CD4-positive, alpha-beta T cell (primary cell): ENCODE measurements at regions of chr13 and their contacts with region 1.

Region 1: GRCh38 chr13:46321494-46322225 is 65.4 kb downstream of the RUBCNL start:
- DNase-seq: peak; percentile 63 to 88 (median 70)
- ATAC-seq: peak; percentile 90
- H3K4me3 ChIP-seq: peak overlapping the region; percentile 37
- H3K4me3 Mint-ChIP-seq: peak overlapping the region; percentile 82
- H3K27ac ChIP-seq: peak overlapping the region; percentile 33 to 46
- H3K27ac Mint-ChIP-seq: peak overlapping the region; percentile 91
- H3K4me1 ChIP-seq: peaks cover 19% of the 10 kb centered on the region
- H3K4me1 Mint-ChIP-seq: peaks cover 43% of the 10 kb centered on the region
- H3K27me3 ChIP-seq: no peaks in the 10 kb centered on the region
- H3K27me3 Mint-ChIP-seq: peaks cover 3% of the 10 kb centered on the region
- CTCF ChIP-seq: peak; percentile 92

Region 2: GRCh38 chr13:45511310-45512097 is 810.2 kb before region 1 on chr13:
- CTCF ChIA-PET with region 1: no interaction called
- POLR2A ChIA-PET with region 1: no interaction called
- intact Hi-C with region 1: loop called (anchors 1 to 2 kb)
- DNase-seq: peak in 8 of 14 experiments; percentile 2 to 83 (median 31)
- ATAC-seq: peak; percentile 91
- H3K4me3 ChIP-seq: no peak overlapping the region
- H3K4me3 Mint-ChIP-seq: no peak overlapping the region
- H3K27ac ChIP-seq: no peak overlapping the region
- H3K27ac Mint-ChIP-seq: peak overlapping the region; percentile 32
- H3K4me1 ChIP-seq: no peaks in the 10 kb centered on the region
- H3K4me1 Mint-ChIP-seq: peaks cover 16% of the 10 kb centered on the region
- H3K27me3 ChIP-seq: no peaks in the 10 kb centered on the region
- H3K27me3 Mint-ChIP-seq: no peaks in the 10 kb centered on the region
- CTCF ChIP-seq: peak; percentile 92

Region 3: GRCh38 chr13:45807520-45808099 is 514.0 kb before region 1 on chr13:
- CTCF ChIA-PET with region 1: no interaction called
- POLR2A ChIA-PET with region 1: interaction called, 3 read pairs
- intact Hi-C with region 1: loop called in 1 of 2 experiments (anchors 2 kb)
- DNase-seq: peak in 8 of 14 experiments; percentile 3 to 58 (median 21)
- ATAC-seq: no peak
- H3K4me3 ChIP-seq: no peak overlapping the region
- H3K4me3 Mint-ChIP-seq: no peak overlapping the region
- H3K27ac ChIP-seq: no peak overlapping the region
- H3K27ac Mint-ChIP-seq: no peak overlapping the region
- H3K4me1 ChIP-seq: peaks cover 4% of the 10 kb centered on the region
- H3K4me1 Mint-ChIP-seq: no peaks in the 10 kb centered on the region
- H3K27me3 ChIP-seq: no peaks in the 10 kb centered on the region
- H3K27me3 Mint-ChIP-seq: no peaks in the 10 kb centered on the region
- CTCF ChIP-seq: peak; percentile 58

Region 4: GRCh38 chr13:46160471-46161066 is 161.1 kb before region 1 on chr13:
- CTCF ChIA-PET with region 1: interaction called, 13 read pairs
- POLR2A ChIA-PET with region 1: no interaction called
- intact Hi-C with region 1: loop called (anchors 1 to 2 kb)
- DNase-seq: peak in 7 of 14 experiments; percentile 19 to 91 (median 51)
- ATAC-seq: peak; percentile 83
- H3K4me3 ChIP-seq: no peak overlapping the region
- H3K4me3 Mint-ChIP-seq: peak overlapping the region; percentile 83
- H3K27ac ChIP-seq: peak overlapping the region; percentile 62 to 69
- H3K27ac Mint-ChIP-seq: peak overlapping the region; percentile 91
- H3K4me1 ChIP-seq: peaks cover 32% of the 10 kb centered on the region
- H3K4me1 Mint-ChIP-seq: peaks cover 57% of the 10 kb centered on the region
- H3K27me3 ChIP-seq: no peaks in the 10 kb centered on the region
- H3K27me3 Mint-ChIP-seq: no peaks in the 10 kb centered on the region
- CTCF ChIP-seq: peak; percentile 89

Region 5: GRCh38 chr13:46184277-46184699 is 137.4 kb before region 1 on chr13:
- CTCF ChIA-PET with region 1: interaction called, 4 read pairs
- POLR2A ChIA-PET with region 1: no interaction called
- intact Hi-C with region 1: loop called in 1 of 2 experiments (anchors 1 kb)
- DNase-seq: peak; percentile 51 to 90 (median 66)
- ATAC-seq: peak; percentile 56
- H3K4me3 ChIP-seq: peak overlapping the region; percentile 21
- H3K4me3 Mint-ChIP-seq: peak overlapping the region; percentile 76
- H3K27ac ChIP-seq: peak overlapping the region; percentile 84 to 91
- H3K27ac Mint-ChIP-seq: peak overlapping the region; percentile 98
- H3K4me1 ChIP-seq: peaks cover 33% of the 10 kb centered on the region
- H3K4me1 Mint-ChIP-seq: peaks cover 47% of the 10 kb centered on the region
- H3K27me3 ChIP-seq: no peaks in the 10 kb centered on the region
- H3K27me3 Mint-ChIP-seq: no peaks in the 10 kb centered on the region
- CTCF ChIP-seq: peak; percentile 74

Region 6: GRCh38 chr13:46295491-46296114 is 26.1 kb before region 1 on chr13:
- CTCF ChIA-PET with region 1: interaction called, 7 read pairs
- POLR2A ChIA-PET with region 1: interaction called, 42 read pairs
- intact Hi-C with region 1: loop called (anchors 1 to 2 kb)
- DNase-seq: peak; percentile 45 to 92 (median 58)
- ATAC-seq: peak; percentile 84
- H3K4me3 ChIP-seq: peak overlapping the region; percentile 11
- H3K4me3 Mint-ChIP-seq: peak overlapping the region; percentile 38
- H3K27ac ChIP-seq: peak overlapping the region; percentile 85 to 89
- H3K27ac Mint-ChIP-seq: peak overlapping the region; percentile 94
- H3K4me1 ChIP-seq: peaks cover 41% of the 10 kb centered on the region
- H3K4me1 Mint-ChIP-seq: peaks cover 58% of the 10 kb centered on the region
- H3K27me3 ChIP-seq: no peaks in the 10 kb centered on the region
- H3K27me3 Mint-ChIP-seq: no peaks in the 10 kb centered on the region
- CTCF ChIP-seq: no peak

Region 7: DNA sequence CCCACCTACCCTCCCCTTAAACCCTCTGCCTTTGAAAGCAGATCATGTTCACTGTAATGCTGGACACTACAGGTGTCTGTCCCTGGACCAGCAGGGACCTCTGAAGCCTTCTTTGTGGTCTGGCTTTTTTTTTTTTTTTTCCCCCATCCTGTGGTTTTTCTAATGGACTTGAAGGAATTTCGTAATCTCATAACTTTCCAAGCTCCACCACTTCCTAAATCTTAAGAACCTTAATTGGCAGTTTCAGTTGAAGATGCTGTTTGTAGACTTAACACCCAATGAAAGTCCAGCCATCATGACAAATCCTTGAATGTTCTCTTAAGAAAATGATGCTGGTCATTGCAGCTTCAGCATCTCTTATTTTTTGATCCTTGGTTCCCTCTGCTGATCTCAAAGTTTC is 186.3 kb after region 1 on chr13:
- CTCF ChIA-PET with region 1: no interaction called
- POLR2A ChIA-PET with region 1: no interaction called
- intact Hi-C with region 1: no loop called
- DNase-seq: no peak
- ATAC-seq: no peak
- H3K4me3 ChIP-seq: no peak overlapping the region
- H3K4me3 Mint-ChIP-seq: no peak overlapping the region
- H3K27ac ChIP-seq: no peak overlapping the region
- H3K27ac Mint-ChIP-seq: no peak overlapping the region
- H3K4me1 ChIP-seq: no peaks in the 10 kb centered on the region
- H3K4me1 Mint-ChIP-seq: no peaks in the 10 kb centered on the region
- H3K27me3 ChIP-seq: no peaks in the 10 kb centered on the region
- H3K27me3 Mint-ChIP-seq: peaks cover 4% of the 10 kb centered on the region
- CTCF ChIP-seq: no peak